Right cardiac atrium (tissue), 5 donors: ENCODE measurements at regions of chr6 and their contacts with region 1.

Region 1: GRCh38 chr6:125153391-125154117 is at the start of gene TPD52L1:
- DNase-seq: peak; percentile 79 to 93 (median 91)
- ATAC-seq: peak; percentile 96 to 97
- H3K4me3 ChIP-seq: peak within 1 kb of the TSS; percentile 34
- H3K27ac ChIP-seq: no peak within 1 kb of the TSS
- H3K4me1 ChIP-seq: no peaks in the 10 kb centered on the region
- H3K27me3 ChIP-seq: no peaks in the 10 kb centered on the region
- total RNA-seq, gene TPD52L1: 14.9 to 29.5 (median 18.2) TPM

Region 2: GRCh38 chr6:125294925-125295324 is 141.4 kb after region 1 on chr6:
- intact Hi-C with region 1: loop called in 3 of 4 experiments (anchors 5 to 10 kb)
- DNase-seq: peak in 1 of 3 donors; percentile 52
- ATAC-seq: peak; percentile 83 to 86
- H3K4me3 ChIP-seq: no peak overlapping the region
- H3K27ac ChIP-seq: no peak overlapping the region
- H3K4me1 ChIP-seq: peaks cover 4% of the 10 kb centered on the region
- H3K27me3 ChIP-seq: no peaks in the 10 kb centered on the region

Region 3: DNA sequence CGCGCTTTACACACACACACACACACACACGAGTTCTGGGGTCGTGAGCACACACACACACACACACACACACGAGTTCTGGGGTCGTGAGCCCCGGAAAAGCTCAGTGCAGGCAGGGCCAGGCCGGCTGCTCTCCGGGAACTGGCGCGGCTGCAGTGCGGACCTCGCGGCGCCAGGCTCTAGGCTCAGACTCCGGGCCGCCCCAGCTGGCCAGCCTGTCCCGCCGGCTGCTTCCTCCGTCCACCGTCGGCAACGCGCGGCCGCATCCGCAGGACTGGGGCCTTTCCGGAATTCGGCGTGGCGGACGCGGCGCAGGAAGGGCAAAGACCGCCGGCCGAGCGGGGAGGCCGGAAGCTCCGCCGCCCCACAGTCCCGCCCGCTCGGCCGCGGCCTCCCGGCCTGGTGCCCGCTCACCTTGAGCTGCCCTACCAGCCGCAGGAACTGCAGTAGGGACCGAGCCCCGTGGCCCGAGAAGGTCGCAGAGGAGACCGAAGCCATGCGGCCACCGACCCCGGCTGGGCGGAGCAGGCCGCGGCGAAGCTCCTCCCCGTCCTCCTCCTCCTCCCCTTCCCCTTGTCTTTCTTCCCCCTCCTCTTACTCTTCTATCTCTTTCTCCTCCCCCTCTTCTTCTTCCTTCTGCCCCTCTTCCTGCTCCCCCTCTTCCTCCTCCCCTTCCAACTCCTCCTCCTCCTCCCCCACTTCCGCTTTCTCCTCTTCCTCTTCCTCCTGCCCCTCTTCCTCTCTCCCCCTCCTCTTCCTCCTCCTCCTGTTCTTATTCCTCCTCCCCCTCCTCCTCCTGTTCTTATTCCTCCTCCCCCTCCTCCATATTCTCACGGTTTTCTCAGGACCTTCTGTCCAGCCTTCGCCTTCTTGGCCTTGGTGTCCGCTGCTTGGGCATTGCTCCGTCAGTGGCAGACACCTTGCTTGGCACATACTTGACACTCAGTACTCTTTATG is 148.2 kb after region 1 on chr6 and contains the start of gene HDDC2:
- intact Hi-C with region 1: loop called in 3 of 4 experiments (anchors 5 to 10 kb)
- DNase-seq: peak; percentile 81 to 92 (median 92)
- ATAC-seq: peak; percentile 94 to 96
- H3K4me3 ChIP-seq: peak within 1 kb of the TSS; percentile 56
- H3K27ac ChIP-seq: peak within 1 kb of the TSS; percentile 61
- H3K4me1 ChIP-seq: no peaks in the 10 kb centered on the region
- H3K27me3 ChIP-seq: no peaks in the 10 kb centered on the region
- total RNA-seq, gene HDDC2: 83.0 to 103 (median 93.7) TPM

Region 4: DNA sequence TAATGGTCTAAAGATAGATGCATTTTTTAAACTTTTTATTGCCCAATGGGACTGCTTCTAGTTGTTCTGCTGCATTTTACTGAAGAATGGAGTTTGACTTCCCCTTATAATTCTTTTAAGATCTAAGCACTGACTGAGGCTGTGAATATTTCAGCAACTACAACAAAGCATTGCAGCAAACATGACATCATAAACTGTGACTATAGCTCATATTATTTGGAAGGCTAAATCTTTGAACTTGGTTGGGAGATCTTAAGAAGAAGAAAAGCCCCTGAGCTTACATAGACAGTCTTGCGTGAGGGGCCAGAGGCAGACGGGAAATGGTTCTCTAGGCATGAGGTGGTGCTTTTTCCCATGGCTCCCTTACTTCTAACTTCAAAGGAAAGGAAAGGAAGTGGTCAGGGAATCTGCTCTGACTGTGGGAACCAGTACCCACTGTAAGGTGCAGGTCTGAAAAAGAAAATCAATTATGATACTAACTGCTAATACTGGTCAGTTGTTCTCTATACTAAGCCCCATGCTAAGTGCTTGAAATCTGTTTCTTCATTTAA is 610.6 kb after region 1 on chr6:
- intact Hi-C with region 1: loop called in 1 of 4 experiments (anchors 10 kb)
- DNase-seq: no peak
- ATAC-seq: no peak
- H3K4me3 ChIP-seq: no peak overlapping the region
- H3K27ac ChIP-seq: no peak overlapping the region
- H3K4me1 ChIP-seq: no peaks in the 10 kb centered on the region
- H3K27me3 ChIP-seq: peaks cover 2% of the 10 kb centered on the region